ENCODE measurements at regions of chr1 and their contacts with region 1.

Region 1: GRCh38 chr1:181142096-181142958 is 53.8 kb downstream of the IER5 start:
- DNase-seq: peak; percentile 65 to 81
- ATAC-seq: peak; percentile 93 to 96
- H3K4me3 ChIP-seq: peak overlapping the region; percentile 37 to 47 (median 42)
- H3K27ac ChIP-seq: peak overlapping the region; percentile 27 to 64 (median 44)
- H3K4me1 ChIP-seq: peaks cover 4 to 18% of the 10 kb centered on the region in 2 donors
- H3K27me3 ChIP-seq: no peaks in the 10 kb centered on the region
- CTCF ChIP-seq: peak; percentile 96 to 99 (median 98)
- POLR2A ChIP-seq: no peak

Region 2: GRCh38 chr1:181033799-181034451 is 108.4 kb before region 1 on chr1 and contains the start of gene MR1:
- in situ Hi-C with region 1: loop called (anchors 5 to 10 kb)
- intact Hi-C with region 1: loop called (anchors 1 kb)
- DNase-seq: no peak
- ATAC-seq: peak; percentile 94
- H3K4me3 ChIP-seq: peak within 1 kb of the TSS; percentile 42 to 57 (median 49)
- H3K27ac ChIP-seq: peak within 1 kb of the TSS; percentile 84 to 91 (median 90)
- H3K4me1 ChIP-seq: peaks cover 13 to 17% of the 10 kb centered on the region in 2 donors
- H3K27me3 ChIP-seq: no peaks in the 10 kb centered on the region
- CTCF ChIP-seq: no peak
- POLR2A ChIP-seq: peak; percentile 21 to 55
- total RNA-seq, gene MR1: 1.6 to 3.5 (median 3.0) TPM

Region 3: GRCh38 chr1:181112071-181112929 is 30.0 kb before region 1 on chr1:
- in situ Hi-C with region 1: no loop called
- intact Hi-C with region 1: loop called (anchors 2 kb)
- DNase-seq: peak; percentile 98 to 99
- ATAC-seq: peak; percentile 94 to 96
- H3K4me3 ChIP-seq: peak overlapping the region in 2 of 4 donors; percentile 4 to 31
- H3K27ac ChIP-seq: peak overlapping the region; percentile 87 to 95 (median 91)
- H3K4me1 ChIP-seq: peaks cover 28 to 32% of the 10 kb centered on the region in 2 donors
- H3K27me3 ChIP-seq: no peaks in the 10 kb centered on the region
- CTCF ChIP-seq: no peak
- POLR2A ChIP-seq: peak; percentile 60 to 78

Measured in gastrocnemius medialis (tissue), 4 donors.